ENCODE measurements at regions of chr12 and their contacts with region 1.

Region 1: GRCh38 chr12:737122-737739 is 15.1 kb upstream of the WNK1 start:
- DNase-seq: no peak
- H3K4me3 ChIP-seq: no peak overlapping the region
- CTCF ChIP-seq: no peak

Region 2: DNA sequence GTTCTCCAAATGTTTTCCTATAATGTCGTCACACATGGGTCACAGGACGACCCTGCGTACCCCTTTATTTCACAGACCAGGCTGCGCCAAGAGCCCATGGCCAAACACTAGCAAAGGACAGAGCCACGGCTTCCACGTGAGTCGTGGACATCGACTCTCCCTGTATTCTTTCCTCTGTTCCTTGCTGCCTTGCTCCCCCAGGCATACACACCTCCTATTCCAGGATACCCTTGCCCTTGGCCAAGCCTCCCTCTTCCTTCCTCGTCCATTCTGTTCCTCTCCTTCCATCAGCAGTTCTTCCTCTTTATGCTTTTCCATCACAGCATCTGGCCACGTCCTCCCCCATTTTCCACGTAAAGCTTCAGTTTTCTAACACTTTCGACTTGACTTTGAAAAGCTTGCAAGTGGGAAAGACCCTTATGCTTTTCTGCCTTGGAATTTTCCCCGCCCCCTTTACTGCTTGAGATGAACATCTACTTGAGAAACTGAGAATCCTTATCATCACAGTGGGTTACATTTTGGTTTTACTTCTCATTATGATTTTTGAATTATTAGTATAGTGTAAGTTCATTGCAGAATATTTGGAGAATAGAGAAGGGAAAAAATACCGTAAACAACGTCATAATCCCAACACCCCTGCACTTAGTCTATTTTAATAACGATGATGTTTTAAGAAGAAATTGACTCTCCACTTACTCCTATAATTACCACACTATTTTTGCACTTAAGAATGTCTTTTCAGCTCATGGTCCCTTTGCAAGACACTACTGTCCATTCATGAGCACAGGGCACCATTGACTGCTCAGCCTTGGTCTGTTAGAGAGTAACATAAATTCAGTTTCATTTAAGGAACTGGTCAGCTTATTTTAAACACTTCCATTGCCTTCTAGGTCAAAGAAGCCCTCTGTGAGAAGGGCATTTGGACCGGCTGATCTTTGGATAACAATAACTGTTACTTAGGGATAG is 58.2 kb before region 1 on chr12:
- in situ Hi-C with region 1: loop called (anchors 5 kb)
- DNase-seq: no peak
- H3K4me3 ChIP-seq: no peak overlapping the region
- CTCF ChIP-seq: no peak

Region 3: DNA sequence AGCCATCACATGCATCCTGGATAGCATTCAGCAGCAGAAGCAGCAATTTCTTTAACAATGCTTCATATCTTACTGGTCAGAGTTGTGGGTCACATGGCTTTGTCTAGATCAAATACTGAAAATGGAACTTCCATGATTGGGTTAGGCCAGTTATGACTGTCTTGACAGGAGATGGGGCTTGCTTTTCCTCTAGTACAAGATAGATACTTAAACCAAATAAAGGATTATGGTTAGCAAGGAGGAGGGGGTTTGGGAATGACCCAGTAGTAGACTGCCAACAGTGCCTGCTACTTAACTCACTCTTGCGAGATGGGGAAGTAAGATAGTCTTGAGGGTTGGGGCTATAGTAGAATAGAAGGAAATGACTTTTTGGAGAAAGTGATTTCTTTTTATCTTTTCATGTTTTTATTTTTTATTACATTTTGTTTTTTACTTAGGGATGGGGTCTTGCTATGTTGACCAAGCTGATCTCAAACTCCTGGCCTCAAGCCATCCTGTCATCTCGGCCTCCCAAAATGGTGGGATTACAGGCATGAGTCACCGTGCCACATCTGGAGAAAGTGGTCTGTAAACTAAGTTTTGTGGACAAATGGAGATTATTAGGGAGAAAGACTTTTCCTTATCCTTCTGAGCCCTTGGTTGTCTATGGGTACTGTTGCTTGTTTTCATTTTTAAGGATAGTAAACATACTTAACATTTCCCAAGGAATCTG is 52.8 kb after region 1 on chr12:
- in situ Hi-C with region 1: loop called (anchors 5 kb)
- DNase-seq: no peak
- H3K4me3 ChIP-seq: no peak overlapping the region
- CTCF ChIP-seq: no peak

Region 4: DNA sequence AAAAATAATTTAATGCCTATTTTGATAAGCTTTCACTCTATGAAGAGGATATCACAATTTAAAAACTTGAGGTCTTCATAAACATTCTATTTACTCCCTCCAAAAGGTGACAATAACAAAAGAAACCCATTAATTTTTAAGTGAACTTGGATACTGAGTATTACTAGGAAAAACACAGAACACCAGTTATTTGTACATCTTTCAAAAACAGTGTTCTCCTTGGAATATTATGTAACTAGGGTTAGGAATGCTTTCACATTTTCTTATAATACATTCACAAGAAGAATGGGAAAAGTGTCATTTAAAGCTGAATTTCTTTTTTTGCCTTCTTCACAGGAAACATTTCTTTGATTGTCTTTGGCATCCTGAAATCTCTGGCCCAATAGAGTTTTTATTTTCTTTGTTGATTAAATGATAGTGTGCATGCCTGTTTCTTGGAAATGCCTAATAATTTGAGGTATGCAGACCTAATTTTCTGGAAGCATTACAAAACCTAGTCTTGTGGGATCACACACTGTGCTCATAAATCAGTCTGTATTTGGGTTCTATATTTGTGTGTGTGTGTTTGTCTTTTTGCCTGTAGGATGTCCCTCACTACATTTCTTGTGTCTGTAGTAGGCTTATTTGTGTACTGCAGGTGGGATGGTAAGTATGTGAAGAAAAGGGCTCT is 91.6 kb after region 1 on chr12:
- in situ Hi-C with region 1: no loop called
- DNase-seq: no peak
- H3K4me3 ChIP-seq: no peak overlapping the region
- CTCF ChIP-seq: no peak